Caco-2 (cell line): ENCODE measurements at regions of chr6 and their contacts with region 1.

Region 1: GRCh38 chr6:85126485-85127167 is 323.3 kb upstream of the NT5E start:
- DNase-seq: peak; percentile 60 to 63
- H3K4me3 ChIP-seq: no peak overlapping the region
- H3K4me3 Mint-ChIP-seq: no peak overlapping the region
- H3K27ac Mint-ChIP-seq: no peak overlapping the region
- H3K4me1 ChIP-seq: no peaks in the 10 kb centered on the region
- H3K4me1 Mint-ChIP-seq: no peaks in the 10 kb centered on the region
- H3K27me3 ChIP-seq: no peaks in the 10 kb centered on the region
- H3K27me3 Mint-ChIP-seq: peaks cover 10% of the 10 kb centered on the region
- CTCF ChIP-seq: peak; percentile 57 to 77

Region 2: DNA sequence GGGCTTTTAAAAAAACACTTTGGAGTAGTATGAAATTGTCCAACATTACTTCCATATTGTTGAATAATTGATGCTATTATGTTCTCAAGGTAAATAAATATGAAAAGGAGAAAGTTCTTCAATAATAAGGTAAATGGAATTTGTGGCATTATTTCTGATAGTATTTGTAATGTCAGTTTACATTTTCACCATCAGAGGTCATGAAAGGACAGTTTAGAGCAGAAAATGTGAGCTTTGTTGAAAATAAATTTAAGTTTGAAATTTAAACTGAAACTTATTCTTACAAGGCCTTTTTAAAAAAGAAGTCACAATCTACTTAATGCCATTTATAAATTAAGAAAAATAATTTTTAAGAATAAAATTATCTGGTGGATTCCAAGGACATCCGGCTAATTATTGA is 883.4 kb before region 1 on chr6:
- CTCF ChIA-PET with region 1: no interaction called
- POLR2A ChIA-PET with region 1: no interaction called
- intact Hi-C with region 1: loop called (anchors 2 kb)
- DNase-seq: no peak
- H3K4me3 ChIP-seq: no peak overlapping the region
- H3K4me3 Mint-ChIP-seq: no peak overlapping the region
- H3K27ac Mint-ChIP-seq: no peak overlapping the region
- H3K4me1 ChIP-seq: no peaks in the 10 kb centered on the region
- H3K4me1 Mint-ChIP-seq: no peaks in the 10 kb centered on the region
- H3K27me3 ChIP-seq: no peaks in the 10 kb centered on the region
- H3K27me3 Mint-ChIP-seq: no peaks in the 10 kb centered on the region
- CTCF ChIP-seq: peak in 1 of 2 experiments; percentile 29

Region 3: DNA sequence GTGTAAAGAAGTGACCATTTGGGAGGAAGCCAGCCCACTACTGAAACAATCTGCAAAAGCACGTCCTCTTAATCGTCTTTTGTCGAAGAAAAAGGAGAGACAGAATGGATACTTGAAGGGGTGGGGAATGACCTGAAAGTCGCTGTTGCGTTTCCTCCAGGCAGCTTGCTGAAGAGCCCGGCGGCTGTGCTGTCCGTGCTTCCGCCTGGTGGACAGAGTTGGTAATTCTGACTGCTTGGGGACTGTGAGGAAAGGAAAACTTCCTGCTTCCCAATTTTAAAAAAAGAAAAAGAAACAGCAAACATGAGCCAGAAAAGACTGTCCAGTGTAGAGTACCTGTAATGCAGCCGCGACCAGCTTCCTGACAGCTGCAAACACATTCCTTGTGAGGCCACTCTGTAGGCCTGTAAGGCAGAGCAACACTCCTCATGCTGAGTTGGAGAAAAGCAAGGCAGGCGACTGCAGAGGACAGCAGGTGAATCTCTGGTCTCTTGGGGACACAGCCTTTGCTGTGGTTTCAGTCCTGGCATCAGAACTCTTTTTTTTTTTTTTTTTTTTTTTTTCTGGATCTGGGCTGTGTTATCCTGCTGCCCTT is 111.1 kb before region 1 on chr6:
- CTCF ChIA-PET with region 1: no interaction called
- POLR2A ChIA-PET with region 1: no interaction called
- intact Hi-C with region 1: loop called (anchors 1 kb)
- DNase-seq: peak; percentile 57 to 61
- H3K4me3 ChIP-seq: no peak overlapping the region
- H3K4me3 Mint-ChIP-seq: no peak overlapping the region
- H3K27ac Mint-ChIP-seq: no peak overlapping the region
- H3K4me1 ChIP-seq: no peaks in the 10 kb centered on the region
- H3K4me1 Mint-ChIP-seq: no peaks in the 10 kb centered on the region
- H3K27me3 ChIP-seq: no peaks in the 10 kb centered on the region; the same call in 1 of the 2 replicates
- H3K27me3 Mint-ChIP-seq: peaks cover 18% of the 10 kb centered on the region
- CTCF ChIP-seq: peak; percentile 65 to 82